Calu3 (cell line): ENCODE measurements at regions of chr18 and their contacts with region 1.

Region 1: DNA sequence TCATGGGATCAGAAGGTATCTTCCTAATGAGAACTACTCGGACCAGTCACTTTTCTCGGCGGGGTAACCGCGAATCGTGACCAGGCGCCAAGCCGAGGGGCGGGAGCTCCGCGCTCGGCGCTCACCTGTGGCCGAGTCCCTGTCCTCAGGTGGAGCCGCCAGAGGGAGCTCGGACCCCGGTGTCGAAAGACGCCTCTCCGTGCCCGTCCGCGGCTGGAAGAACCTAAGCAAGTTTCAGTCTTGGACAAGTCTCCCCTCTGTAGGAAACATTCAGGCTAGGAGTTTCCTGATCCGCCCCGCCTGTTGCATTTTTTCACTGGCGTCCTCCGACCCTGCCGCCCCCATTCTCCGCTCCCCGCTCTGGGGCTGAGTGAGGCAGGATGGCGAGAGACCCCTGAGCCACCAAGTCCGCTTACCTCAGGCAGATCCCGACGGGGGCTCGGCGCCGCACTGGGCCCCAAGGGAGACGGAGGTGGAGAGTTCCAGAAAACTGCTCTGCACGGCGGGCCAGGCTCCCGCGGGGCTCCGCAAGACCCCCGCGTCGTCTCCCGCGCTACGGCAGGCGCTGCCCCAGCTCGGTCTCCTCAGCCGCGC is 478 bp downstream of the DSEL start:
- DNase-seq: peak; percentile 94
- H3K4me3 Mint-ChIP-seq: peak overlapping the region; percentile 85
- H3K27ac Mint-ChIP-seq: peak overlapping the region; percentile 66
- H3K4me1 Mint-ChIP-seq: peaks cover 20% of the 10 kb centered on the region
- H3K27me3 Mint-ChIP-seq: no peaks in the 10 kb centered on the region
- CTCF ChIP-seq: peak; percentile 82

Region 2: DNA sequence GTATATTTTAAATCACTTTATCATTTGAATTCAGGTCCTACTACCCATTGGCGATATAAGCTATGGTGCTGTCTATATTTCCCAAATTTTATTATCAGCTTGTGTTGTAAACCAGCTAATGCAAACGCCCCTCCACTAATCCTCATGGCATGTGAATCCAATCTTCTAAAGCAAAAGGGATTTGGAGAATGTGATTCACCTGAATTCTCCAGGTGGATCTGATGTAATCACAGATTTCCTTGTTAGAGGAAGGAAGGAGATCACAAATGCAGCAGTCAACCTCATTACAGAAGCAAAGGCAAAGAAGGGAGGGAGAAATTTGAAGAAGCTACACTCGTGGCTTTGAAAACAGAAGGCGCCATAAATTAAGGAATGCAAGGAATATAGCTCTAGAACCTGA is 481.0 kb before region 1 on chr18:
- CTCF ChIA-PET with region 1: no interaction called
- intact Hi-C with region 1: no loop called
- DNase-seq: no peak
- H3K4me3 Mint-ChIP-seq: no peak overlapping the region
- H3K27ac Mint-ChIP-seq: no peak overlapping the region
- H3K4me1 Mint-ChIP-seq: no peaks in the 10 kb centered on the region
- H3K27me3 Mint-ChIP-seq: no peaks in the 10 kb centered on the region
- CTCF ChIP-seq: no peak

Region 3: GRCh38 chr18:67217551-67218166 is 298.4 kb before region 1 on chr18:
- CTCF ChIA-PET with region 1: no interaction called
- intact Hi-C with region 1: loop called (anchors 1 kb)
- DNase-seq: peak; percentile 62
- H3K4me3 Mint-ChIP-seq: no peak overlapping the region
- H3K27ac Mint-ChIP-seq: no peak overlapping the region
- H3K4me1 Mint-ChIP-seq: no peaks in the 10 kb centered on the region
- H3K27me3 Mint-ChIP-seq: no peaks in the 10 kb centered on the region
- CTCF ChIP-seq: peak; percentile 74

Region 4: DNA sequence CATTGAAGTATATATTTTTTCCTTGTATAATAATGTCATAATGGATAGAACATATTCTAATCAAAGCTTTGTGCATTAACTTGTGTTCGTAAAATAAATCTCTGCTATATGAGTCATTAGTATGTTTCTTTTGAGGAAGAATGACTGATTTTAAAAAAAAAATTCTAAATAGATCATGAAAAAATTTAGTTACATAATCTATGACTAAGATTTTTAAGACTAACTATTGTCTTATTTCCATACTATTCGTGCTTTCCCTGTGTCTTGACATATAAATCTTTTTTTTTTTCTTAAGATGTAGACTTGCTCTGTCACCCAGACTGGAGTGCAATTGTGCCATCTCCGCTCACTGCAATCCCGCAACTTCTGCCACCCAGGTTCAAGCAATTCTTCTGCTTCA is 225.6 kb before region 1 on chr18:
- CTCF ChIA-PET with region 1: no interaction called
- intact Hi-C with region 1: no loop called
- DNase-seq: no peak
- H3K4me3 Mint-ChIP-seq: no peak overlapping the region
- H3K27ac Mint-ChIP-seq: no peak overlapping the region
- H3K4me1 Mint-ChIP-seq: no peaks in the 10 kb centered on the region
- H3K27me3 Mint-ChIP-seq: no peaks in the 10 kb centered on the region
- CTCF ChIP-seq: no peak

Region 5: DNA sequence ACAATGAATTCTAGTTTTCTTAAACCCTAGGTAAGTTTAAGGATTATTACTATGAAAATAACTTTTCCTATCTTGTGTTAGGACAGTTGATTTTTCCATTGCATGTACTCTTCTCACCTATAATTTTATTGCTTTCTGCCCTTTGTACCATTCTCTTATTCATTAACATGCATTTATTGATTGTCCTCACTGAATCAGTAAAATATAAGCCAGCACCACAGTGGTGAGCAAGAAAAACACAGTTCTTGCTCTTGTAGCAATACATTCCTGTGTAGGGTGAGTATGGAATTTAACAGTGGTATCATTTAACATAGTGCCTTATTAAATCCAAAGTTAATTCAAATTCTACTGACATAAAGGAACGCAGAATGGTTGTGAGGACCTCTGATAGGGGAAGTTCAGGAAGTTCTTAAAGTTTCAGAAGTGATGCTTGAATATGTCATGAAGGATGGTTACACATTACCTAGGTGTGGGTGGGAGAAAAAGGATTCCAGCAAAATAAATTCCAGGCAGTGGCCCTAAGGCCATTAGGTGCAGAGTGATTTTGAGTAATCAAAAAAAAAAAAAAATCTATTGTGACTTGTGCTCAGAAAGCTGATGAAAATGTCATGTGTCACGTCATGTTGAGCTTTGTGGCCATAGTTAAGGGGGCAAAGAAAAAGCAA is 105.1 kb after region 1 on chr18:
- CTCF ChIA-PET with region 1: interaction called, 4 read pairs
- intact Hi-C with region 1: loop called (anchors 2 kb)
- DNase-seq: peak; percentile 34
- H3K4me3 Mint-ChIP-seq: peak overlapping the region; percentile 53
- H3K27ac Mint-ChIP-seq: peak overlapping the region; percentile 67
- H3K4me1 Mint-ChIP-seq: peaks cover 82% of the 10 kb centered on the region
- H3K27me3 Mint-ChIP-seq: no peaks in the 10 kb centered on the region
- CTCF ChIP-seq: no peak

Region 6: DNA sequence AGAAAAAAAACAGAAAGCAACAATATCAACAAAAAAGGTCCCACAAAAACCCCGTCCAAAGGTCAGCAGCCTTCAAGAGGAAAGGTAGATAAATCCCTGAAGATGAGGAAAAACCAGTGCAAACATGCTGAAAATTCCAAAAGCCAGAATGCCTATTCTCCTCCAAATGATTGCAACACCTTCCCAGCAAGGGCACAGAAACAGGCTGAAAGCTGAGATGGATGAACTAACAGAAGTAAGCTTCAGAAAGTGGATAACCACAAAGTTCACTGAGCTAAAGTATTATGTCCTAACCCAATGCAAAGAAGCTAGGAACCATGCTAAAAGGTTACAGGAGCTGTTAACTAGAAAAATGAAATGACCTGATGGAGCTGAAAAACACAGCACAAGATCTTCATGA is 226.9 kb after region 1 on chr18:
- CTCF ChIA-PET with region 1: no interaction called
- intact Hi-C with region 1: no loop called
- DNase-seq: no peak
- H3K4me3 Mint-ChIP-seq: no peak overlapping the region
- H3K27ac Mint-ChIP-seq: no peak overlapping the region
- H3K4me1 Mint-ChIP-seq: no peaks in the 10 kb centered on the region
- H3K27me3 Mint-ChIP-seq: no peaks in the 10 kb centered on the region
- CTCF ChIP-seq: no peak

Region 7: DNA sequence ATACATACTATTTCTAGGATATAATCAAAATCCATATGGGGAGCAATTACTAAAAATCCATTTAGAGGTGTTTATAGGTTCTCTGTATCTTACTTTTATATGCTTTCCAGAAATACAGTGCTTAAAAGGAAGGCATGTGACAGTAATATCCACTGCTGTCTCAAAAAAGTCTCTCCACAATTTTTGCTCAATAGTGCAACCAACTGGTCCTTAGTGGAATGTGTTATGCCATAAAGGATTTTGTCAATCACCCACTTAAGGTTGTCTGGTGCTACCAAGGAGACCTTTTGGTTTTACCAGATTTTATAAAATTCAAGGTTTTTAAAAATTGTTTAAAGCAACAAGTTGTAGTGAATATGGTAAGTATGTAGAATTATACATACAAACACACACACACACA is 329.0 kb after region 1 on chr18:
- CTCF ChIA-PET with region 1: no interaction called
- intact Hi-C with region 1: loop called (anchors 1 kb)
- DNase-seq: no peak
- H3K4me3 Mint-ChIP-seq: no peak overlapping the region
- H3K27ac Mint-ChIP-seq: no peak overlapping the region
- H3K4me1 Mint-ChIP-seq: peaks cover 9% of the 10 kb centered on the region
- H3K27me3 Mint-ChIP-seq: no peaks in the 10 kb centered on the region
- CTCF ChIP-seq: no peak

Region 8: DNA sequence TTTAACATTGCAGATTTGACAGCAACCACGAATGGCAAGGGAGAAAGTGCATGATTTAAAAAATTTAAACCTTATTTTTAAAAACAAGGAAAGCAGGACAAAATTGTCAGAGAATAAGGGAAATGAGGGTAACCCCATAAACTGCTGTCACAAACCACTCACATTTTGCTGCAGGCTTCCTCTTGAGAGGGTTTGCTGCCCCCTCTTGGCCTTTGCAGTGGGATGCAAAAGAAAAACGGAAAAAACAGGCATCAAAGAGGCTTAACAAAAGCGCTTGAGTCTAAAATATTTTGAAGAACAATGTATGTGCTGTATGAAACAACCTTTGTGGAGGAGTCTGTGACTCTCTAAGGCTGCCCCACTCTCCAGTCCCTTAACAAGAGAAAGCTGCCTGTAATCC is 1107.3 kb after region 1 on chr18:
- CTCF ChIA-PET with region 1: no interaction called
- intact Hi-C with region 1: loop called (anchors 5 kb)
- DNase-seq: peak; percentile 60
- H3K4me3 Mint-ChIP-seq: no peak overlapping the region
- H3K27ac Mint-ChIP-seq: no peak overlapping the region
- H3K4me1 Mint-ChIP-seq: no peaks in the 10 kb centered on the region
- H3K27me3 Mint-ChIP-seq: no peaks in the 10 kb centered on the region
- CTCF ChIP-seq: peak; percentile 77